ENCODE measurements at regions of chr1 and their contacts with region 1.

Region 1: DNA sequence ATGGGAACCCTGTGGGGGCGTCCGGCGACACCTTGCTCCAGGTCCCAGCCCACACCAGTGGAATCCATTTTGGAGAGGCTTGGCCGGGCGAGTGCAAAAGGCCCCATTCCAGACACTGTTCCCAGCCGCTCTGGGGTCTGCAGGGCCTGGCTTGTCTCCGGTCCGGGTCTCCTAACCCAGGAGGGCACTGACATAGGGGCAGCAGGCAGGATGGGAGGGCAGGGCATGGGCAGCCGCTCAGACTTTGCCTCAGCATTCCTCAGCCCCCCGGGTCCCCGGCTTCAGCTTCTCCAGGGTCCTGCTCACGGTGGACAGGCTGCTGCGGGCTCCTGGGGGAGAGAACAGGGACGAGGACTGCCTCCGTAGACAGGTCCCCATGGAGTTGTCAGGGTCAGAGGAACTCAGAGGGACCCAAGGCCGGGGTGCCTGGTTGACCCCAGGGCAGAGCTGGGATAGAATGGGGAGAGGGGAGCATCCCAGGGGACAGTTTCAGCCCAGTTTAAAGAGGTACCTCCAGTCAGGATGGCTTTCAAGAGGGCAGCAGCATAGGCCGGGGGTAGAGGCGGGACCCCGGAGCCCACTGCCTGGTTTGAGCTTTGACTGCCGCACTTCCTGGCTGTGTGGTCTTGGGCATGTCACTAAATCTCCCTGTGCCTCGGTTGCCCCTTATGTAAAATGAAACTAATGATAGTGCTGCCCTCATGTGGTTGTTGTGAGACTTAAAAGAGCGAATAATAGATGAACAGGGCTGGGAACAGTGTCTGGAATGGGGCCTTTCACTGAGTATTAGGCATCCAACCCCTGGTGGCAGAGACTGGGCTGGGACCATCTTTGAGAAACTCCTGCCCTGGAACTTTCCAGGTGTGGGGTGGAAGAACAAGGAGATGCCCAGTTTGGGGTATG is 3.7 kb downstream of the KNCN start:
- DNase-seq: peak; percentile 62
- ATAC-seq: peak; percentile 83
- H3K4me3 ChIP-seq: no peak overlapping the region
- H3K27ac ChIP-seq: no peak overlapping the region
- H3K4me1 ChIP-seq: no peaks in the 10 kb centered on the region
- H3K27me3 ChIP-seq: peaks cover 78% of the 10 kb centered on the region
- CTCF ChIP-seq: peak; percentile 58
- POLR2A ChIP-seq: no peak
- RAD21 ChIP-seq: peak; percentile 54

Region 2: GRCh38 chr1:46077644-46078043 is 470.1 kb before region 1 on chr1:
- CTCF ChIA-PET with region 1: no interaction called
- POLR2A ChIA-PET with region 1: no interaction called
- dilution Hi-C with region 1: no loop called
- in situ Hi-C with region 1: no loop called
- intact Hi-C with region 1: no loop called
- DNase-seq: no peak
- ATAC-seq: no peak
- H3K4me3 ChIP-seq: no peak overlapping the region
- H3K27ac ChIP-seq: no peak overlapping the region
- H3K4me1 ChIP-seq: no peaks in the 10 kb centered on the region
- H3K27me3 ChIP-seq: no peaks in the 10 kb centered on the region
- CTCF ChIP-seq: no peak
- POLR2A ChIP-seq: no peak
- RAD21 ChIP-seq: no peak

Region 3: DNA sequence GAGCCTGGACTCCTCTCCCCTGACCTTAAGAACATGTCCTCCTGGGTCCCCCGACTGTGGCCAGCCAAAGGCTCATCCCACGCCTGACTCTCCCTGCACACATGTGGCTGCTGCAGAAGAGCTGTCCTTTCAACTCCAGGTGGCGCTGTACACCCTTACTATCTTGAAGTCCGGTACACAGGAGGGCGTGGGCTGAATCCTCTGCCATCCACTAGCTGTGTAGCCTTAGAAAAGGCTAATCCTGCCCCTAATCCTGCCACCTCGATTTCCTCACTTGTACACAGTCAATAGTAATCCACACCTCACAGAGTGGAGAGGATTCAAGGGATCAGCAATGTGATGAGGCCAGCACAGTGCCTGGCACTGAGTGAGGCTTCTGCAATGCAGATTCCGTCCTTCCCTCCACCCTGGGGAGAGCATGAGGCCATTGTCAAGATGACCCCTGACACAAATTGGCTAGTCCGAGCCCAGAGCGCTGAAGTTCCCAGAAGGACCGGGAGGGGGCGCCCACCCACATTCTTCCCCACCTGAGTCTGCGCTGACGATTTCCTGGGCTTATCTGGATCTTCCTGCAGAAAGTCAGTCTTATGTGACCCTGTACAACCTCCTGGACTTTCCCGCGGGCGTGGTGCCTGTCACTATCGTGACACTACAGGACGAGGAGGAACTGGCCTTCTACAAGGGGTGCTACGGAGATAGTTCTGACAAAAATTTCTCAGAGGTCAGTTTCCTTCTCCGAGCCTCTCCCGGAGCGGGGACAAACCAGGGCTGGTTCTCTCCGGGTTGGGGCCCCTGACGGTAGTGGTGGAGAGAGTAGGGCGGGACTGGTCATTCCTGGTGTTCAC is 105.2 kb before region 1 on chr1:
- CTCF ChIA-PET with region 1: no interaction called
- POLR2A ChIA-PET with region 1: no interaction called
- dilution Hi-C with region 1: no loop called
- in situ Hi-C with region 1: no loop called
- intact Hi-C with region 1: loop called (anchors 1 kb)
- DNase-seq: peak; percentile 69
- ATAC-seq: peak; percentile 93
- H3K4me3 ChIP-seq: peak overlapping the region; percentile 20; the same call in 1 of the 2 replicates
- H3K27ac ChIP-seq: no peak overlapping the region
- H3K4me1 ChIP-seq: no peaks in the 10 kb centered on the region
- H3K27me3 ChIP-seq: peaks cover 42% of the 10 kb centered on the region
- CTCF ChIP-seq: peak; percentile 73
- POLR2A ChIP-seq: no peak
- RAD21 ChIP-seq: peak; percentile 30

Region 4: DNA sequence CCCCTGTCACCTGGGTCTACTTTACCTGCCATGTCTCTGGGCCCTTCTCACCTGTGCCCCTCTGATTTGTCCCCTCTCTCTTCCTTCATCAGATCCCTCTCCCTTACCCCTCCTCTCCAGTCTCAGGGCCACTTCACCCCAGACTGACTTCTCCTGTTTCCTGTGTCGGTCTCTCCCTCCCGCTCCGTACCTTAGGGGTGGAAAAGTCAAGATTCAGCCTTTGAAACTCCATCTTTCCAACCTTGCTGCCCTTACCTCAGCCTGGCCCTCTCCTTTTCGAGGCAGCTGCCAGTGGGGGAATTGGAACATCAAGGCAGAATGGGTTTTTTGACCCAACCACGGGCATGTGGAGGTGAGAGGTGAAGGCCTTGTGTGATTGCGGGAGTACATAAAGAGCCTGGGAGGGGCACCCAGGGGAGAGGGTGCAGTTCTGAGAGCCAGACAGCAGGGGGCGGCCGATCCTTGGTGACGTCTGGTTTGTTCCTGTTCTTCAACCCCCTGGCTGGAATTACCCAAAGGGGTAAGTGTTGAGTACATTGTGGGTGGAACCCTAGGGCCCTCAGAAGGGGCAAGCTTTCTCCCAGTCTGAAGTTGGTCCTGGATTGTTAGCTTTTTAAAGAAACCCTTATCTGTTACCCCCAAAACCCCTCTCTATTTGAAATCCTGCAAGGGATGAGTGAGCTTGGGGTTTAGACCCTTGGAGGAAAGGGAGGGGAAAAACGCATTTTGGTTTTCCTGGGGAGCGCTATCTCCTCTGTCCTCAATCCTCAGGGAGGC is 70.4 kb before region 1 on chr1:
- CTCF ChIA-PET with region 1: no interaction called
- POLR2A ChIA-PET with region 1: no interaction called
- dilution Hi-C with region 1: no loop called
- in situ Hi-C with region 1: no loop called
- intact Hi-C with region 1: loop called (anchors 5 kb)
- DNase-seq: peak; percentile 55
- ATAC-seq: peak; percentile 98
- H3K4me3 ChIP-seq: no peak overlapping the region
- H3K27ac ChIP-seq: no peak overlapping the region
- H3K4me1 ChIP-seq: no peaks in the 10 kb centered on the region
- H3K27me3 ChIP-seq: peaks cover 73% of the 10 kb centered on the region
- CTCF ChIP-seq: peak; percentile 91
- POLR2A ChIP-seq: no peak
- RAD21 ChIP-seq: peak; percentile 85

Measured in IMR-90 (cell line).